Activated T-helper 2 cell treated with anti-CD3 and anti-CD28 coated beads, Interferon-gamma antibody, Interleukin-2, Interleukin-4, amounts not matched to agents 10 μg/mL and 5 μg/mL and 100 μg/mL, durations not matched to agents 14 hours and 24 hours and 36 hours (primary cell): ENCODE measurements at regions of chr14 and their contacts with region 1.

Region 1: DNA sequence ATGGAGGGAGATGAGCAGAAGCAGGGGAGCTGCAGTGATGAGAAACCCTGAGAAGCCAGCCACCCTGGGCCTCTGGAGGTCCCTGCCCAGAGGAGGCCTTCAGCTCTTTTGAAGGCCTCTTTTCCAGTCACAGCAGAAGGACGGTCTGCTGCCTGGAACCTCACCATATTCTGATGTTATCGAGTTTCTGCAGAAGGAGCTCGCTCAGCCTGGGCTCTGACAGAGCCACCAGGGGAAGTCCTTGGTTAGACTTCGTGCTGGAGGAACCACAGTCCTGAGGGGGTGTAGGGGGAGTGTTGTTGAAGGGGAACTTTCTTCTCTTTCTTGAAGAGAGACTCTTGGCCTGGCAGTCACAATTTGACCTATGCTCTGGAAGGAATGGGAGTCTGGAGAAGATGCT is 25.1 kb upstream of the BATF start:
- DNase-seq: peak; percentile 58
- H3K4me3 Mint-ChIP-seq: peak overlapping the region; percentile 73
- H3K27ac Mint-ChIP-seq: peak overlapping the region; percentile 96
- H3K4me1 Mint-ChIP-seq: peaks cover 67% of the 10 kb centered on the region
- H3K27me3 Mint-ChIP-seq: no peaks in the 10 kb centered on the region

Region 2: DNA sequence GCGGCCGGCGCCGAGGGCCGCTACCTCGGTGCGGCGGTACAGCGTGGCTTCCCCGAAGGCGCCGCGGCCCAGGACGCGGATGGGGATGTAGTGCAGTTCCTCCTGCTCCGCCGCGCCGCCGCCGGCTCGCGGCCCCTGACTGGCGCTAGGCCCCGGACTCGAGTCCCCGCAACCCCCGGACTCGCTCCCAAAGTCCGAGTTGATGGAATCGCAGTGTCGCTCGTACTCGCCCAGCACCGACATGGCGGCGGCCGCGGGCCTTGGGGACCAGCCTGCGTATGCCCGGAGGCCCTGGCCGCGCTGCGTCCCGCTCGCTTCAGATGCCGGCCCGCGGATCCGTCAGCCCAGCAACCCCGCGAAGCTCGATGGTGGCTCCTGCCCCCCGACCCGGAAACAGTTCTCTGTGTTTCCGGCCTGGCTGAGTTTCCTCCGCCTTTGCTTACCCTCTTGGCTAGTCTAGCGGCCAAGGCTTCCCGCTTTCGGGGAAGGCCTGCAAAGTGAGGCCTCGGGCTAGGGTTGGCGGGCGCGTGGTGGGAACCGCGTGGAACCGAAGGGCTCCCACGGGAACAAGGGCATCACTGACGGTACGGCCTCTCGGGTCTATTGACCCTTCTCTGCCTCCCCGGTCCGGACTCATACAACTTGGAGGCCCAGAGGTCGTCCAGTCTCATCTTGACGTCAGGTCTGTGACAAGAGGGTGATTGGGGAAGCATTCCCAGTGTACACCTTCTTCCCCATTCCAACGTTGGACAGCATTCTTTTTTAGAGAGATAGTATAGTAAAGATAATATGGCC is 370.3 kb before region 1 on chr14 and contains the start of gene NEK9:
- intact Hi-C with region 1: loop called (anchors 10 kb)
- DNase-seq: peak; percentile 85
- H3K4me3 Mint-ChIP-seq: peak within 1 kb of the TSS; percentile 98
- H3K27ac Mint-ChIP-seq: peak within 1 kb of the TSS; percentile 96
- H3K4me1 Mint-ChIP-seq: peaks cover 39% of the 10 kb centered on the region
- H3K27me3 Mint-ChIP-seq: no peaks in the 10 kb centered on the region
- total RNA-seq, gene NEK9: 58.1 and 69.8 TPM in 2 replicates

Region 3: DNA sequence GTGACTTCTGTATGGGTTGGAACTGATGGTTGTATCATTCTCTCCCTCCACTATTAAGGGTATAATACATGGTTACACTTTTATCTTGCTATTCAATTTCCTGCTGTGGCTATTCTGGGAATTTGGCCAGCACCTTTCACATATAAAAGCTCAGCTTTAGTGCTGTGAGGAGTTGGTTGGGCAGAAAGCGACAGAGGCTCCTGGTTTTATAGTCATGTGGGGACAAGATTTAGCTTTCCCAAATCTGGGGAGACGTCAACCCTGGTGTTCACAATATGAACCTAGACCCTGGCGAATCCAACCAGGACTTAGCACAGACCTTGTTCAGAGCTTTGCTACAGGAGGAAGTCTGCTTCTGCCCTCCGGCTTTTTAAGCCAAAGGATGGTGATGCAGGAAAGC is 182.0 kb before region 1 on chr14:
- intact Hi-C with region 1: no loop called
- DNase-seq: no peak
- H3K4me3 Mint-ChIP-seq: no peak overlapping the region
- H3K27ac Mint-ChIP-seq: no peak overlapping the region
- H3K4me1 Mint-ChIP-seq: peaks cover 4% of the 10 kb centered on the region
- H3K27me3 Mint-ChIP-seq: peaks cover 13% of the 10 kb centered on the region

Region 4: GRCh38 chr14:75522224-75522982 is 25.2 kb after region 1 on chr14 and contains the start of gene BATF:
- intact Hi-C with region 1: loop called (anchors 1 kb)
- DNase-seq: peak; percentile 76
- H3K4me3 Mint-ChIP-seq: peak within 1 kb of the TSS; percentile 100
- H3K27ac Mint-ChIP-seq: peak within 1 kb of the TSS; percentile 99
- H3K4me1 Mint-ChIP-seq: peaks cover 66% of the 10 kb centered on the region
- H3K27me3 Mint-ChIP-seq: no peaks in the 10 kb centered on the region
- total RNA-seq, gene BATF: 152 and 154 TPM in 2 replicates

Region 5: GRCh38 chr14:75560962-75561432 is 63.8 kb after region 1 on chr14:
- intact Hi-C with region 1: loop called (anchors 1 kb)
- DNase-seq: no peak
- H3K4me3 Mint-ChIP-seq: no peak overlapping the region
- H3K27ac Mint-ChIP-seq: peak overlapping the region; percentile 89
- H3K4me1 Mint-ChIP-seq: peaks cover 63% of the 10 kb centered on the region
- H3K27me3 Mint-ChIP-seq: no peaks in the 10 kb centered on the region

Region 6: DNA sequence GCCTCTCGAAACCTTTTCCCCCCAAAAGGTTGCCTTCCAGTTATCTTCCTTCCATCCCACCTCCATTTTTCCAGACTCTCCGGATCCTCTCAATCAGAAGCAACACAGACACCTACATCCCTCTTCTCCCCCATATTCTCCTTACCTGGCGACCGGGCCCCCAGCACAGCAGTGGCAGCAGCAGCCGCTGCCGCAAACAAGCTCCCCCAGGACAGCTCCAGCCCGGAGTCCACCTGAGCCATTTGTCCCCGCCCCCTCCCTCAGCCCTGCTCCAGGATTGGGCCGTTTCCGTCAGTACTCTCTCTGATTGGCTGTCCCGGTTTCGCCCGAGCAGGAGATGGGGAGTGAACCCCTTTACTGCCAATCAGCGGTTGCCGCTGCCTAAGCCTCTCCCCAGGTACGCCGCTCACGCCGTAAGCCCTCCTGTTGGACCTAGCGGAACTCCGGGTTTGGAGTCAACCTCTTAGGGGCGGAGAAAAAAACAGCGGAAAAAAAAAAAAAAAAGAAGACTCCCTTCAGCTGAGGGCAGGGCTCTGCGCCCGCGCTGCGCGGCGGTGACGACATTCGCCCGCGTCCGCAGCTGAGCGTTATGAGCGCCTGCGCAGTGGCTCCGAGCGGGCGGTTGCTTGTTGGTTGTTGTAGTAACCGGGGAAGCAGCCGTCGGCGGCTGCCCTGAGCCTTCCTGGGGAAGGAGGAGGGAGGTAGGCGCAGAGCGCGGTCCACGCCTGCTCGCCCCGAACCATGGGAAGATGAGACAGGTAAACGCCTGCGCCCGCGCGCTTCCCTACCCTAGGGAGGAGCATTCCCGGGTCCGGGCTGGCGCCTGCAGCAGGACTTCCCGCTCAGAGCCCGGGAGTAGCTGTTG is 163.7 kb after region 1 on chr14 and contains the starts of genes ERG28 and TTLL5:
- intact Hi-C with region 1: loop called (anchors 2 kb)
- DNase-seq: peak; percentile 98
- H3K4me3 Mint-ChIP-seq: peak within 1 kb of the TSS; percentile 98
- H3K27ac Mint-ChIP-seq: peak within 1 kb of the TSS; percentile 93
- H3K4me1 Mint-ChIP-seq: peaks cover 29% of the 10 kb centered on the region
- H3K27me3 Mint-ChIP-seq: no peaks in the 10 kb centered on the region
- total RNA-seq, gene ERG28: 20.3 and 21.6 TPM in 2 replicates
- total RNA-seq, gene TTLL5: 28.8 and 29.6 TPM in 2 replicates